ENCODE measurements at regions of chrX and their contacts with region 1.

Region 1: DNA sequence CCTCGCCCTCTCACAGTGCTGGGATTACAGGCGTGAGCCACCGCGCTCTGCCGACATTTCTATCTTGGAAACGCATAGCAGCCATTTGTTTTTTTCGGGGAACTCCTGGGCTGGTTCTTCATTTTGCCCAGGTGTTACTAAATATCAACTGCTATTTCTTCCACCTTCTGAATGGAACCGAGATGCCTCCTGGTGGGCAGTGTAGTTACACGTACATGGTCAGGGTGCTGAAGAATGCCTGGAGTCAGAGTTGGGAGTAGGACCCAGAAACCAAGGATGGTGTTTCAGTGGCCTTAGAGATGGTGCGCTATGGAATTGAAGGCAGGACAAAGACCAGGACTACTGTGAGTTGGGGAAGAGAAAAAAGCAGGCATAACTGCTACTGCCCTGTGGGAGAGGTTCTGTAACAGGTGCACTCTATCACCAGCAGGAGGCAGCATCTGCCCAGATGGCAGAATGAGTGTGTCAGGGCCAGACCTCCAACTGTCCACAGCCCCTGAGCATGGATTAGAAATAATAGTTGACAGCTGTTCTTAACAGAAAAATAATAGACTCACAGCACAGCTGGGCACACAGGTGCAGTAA is 81.7 kb downstream of the ZC4H2 start:
- DNase-seq: no peak
- H3K4me3 ChIP-seq: no peak overlapping the region
- H3K27ac ChIP-seq: no peak overlapping the region
- H3K4me1 ChIP-seq: no peaks in the 10 kb centered on the region
- H3K27me3 ChIP-seq: peaks cover 0 to 7% of the 10 kb centered on the region in 2 donors
- CTCF ChIP-seq: peak in 1 of 3 donors; percentile 13
- POLR2A ChIP-seq: no peak

Region 2: GRCh38 chrX:64631769-64632168 is 262.8 kb before region 1 on chrX:
- intact Hi-C with region 1: no loop called
- DNase-seq: no peak
- H3K4me3 ChIP-seq: no peak overlapping the region
- H3K27ac ChIP-seq: no peak overlapping the region
- H3K4me1 ChIP-seq: no peaks in the 10 kb centered on the region
- H3K27me3 ChIP-seq: no peaks in the 10 kb centered on the region
- CTCF ChIP-seq: no peak
- POLR2A ChIP-seq: no peak

Region 3: GRCh38 chrX:64925480-64925879 is 30.9 kb after region 1 on chrX:
- intact Hi-C with region 1: loop called (anchors 1 kb)
- DNase-seq: no peak
- H3K4me3 ChIP-seq: no peak overlapping the region
- H3K27ac ChIP-seq: no peak overlapping the region
- H3K4me1 ChIP-seq: no peaks in the 10 kb centered on the region
- H3K27me3 ChIP-seq: no peaks in the 10 kb centered on the region
- CTCF ChIP-seq: no peak
- POLR2A ChIP-seq: no peak

Region 4: DNA sequence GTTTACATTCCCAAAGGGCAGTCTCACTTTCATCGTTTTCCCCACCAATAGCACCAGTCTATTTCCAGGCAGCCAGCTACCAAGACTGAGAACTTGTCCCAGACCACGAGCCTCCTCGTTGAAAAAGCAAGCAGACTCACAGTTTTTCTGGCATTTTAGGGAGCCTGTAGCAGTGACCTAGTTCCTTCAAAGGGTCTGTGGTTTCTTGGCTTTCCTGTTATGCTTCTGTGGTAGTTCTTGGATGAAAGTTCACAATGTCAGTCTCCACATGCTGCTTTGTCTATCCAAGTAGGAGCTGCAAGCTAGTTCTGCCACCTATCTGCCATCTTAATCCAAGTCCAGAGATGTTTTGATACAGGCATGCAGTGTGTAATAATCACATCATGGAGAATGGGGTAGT is 233.3 kb after region 1 on chrX:
- intact Hi-C with region 1: loop called (anchors 5 kb)
- DNase-seq: no peak
- H3K4me3 ChIP-seq: no peak overlapping the region
- H3K27ac ChIP-seq: no peak overlapping the region
- H3K4me1 ChIP-seq: no peaks in the 10 kb centered on the region
- H3K27me3 ChIP-seq: no peaks in the 10 kb centered on the region
- CTCF ChIP-seq: no peak
- POLR2A ChIP-seq: no peak